Heart right ventricle (tissue), 16 donors: ENCODE measurements at regions of chr15 and their contacts with region 1.

Region 1: GRCh38 chr15:100635406-100636071 is 33.1 kb downstream of the ASB7 start:
- DNase-seq: no peak
- ATAC-seq: no peak
- H3K4me3 ChIP-seq: no peak overlapping the region
- H3K27ac ChIP-seq: no peak overlapping the region
- H3K4me1 ChIP-seq: peaks cover 0 to 8% (median 0%) of the 10 kb centered on the region in 9 donors
- H3K27me3 ChIP-seq: no peaks in the 10 kb centered on the region
- CTCF ChIP-seq: no peak

Region 2: DNA sequence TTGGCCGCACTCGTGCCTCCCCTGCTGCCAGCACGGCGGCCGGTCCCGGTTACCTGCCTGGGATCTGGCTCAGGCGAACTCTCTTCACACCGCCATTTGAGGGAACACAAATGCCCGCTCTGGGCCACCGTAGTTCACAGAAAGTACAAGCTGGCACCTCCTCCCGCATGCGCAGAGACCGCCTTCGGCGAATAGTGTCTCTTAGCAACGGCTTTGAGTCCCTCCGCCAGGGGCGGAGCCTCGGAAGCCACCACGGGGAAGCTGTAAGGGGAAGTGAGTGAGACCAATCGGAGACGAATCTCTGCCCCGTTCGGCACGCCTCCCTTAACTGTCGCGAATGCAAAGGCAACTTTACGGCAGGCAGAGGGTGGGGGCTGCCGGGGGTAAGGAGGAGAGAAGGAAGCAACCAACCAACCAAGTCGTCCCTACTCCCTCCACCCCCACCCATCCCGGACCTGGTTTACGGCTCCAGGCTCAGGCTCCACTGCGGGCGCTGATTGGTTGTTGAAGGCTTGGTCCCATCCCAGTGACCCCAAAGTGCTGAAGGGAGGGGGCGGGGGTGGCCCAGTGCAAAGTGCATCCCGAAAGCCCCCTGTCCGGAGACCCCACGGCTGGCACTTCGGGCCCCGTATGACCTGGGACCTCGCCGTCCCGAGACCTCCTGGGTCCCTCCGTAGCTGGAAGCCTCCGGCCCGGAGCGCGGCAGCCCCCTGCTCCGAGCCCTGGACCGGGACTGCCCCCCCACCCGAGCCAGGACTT is 33.3 kb before region 1 on chr15 and contains the starts of genes ASB7 and LINS1:
- intact Hi-C with region 1: no loop called
- DNase-seq: peak; percentile 100
- ATAC-seq: peak; percentile 97 to 99 (median 99)
- H3K4me3 ChIP-seq: peak within 1 kb of the TSS; percentile 63 to 100 (median 84)
- H3K27ac ChIP-seq: peak within 1 kb of the TSS; percentile 2 to 92 (median 88)
- H3K4me1 ChIP-seq: peaks cover 3 to 47% (median 37%) of the 10 kb centered on the region in 9 donors
- H3K27me3 ChIP-seq: no peaks in the 10 kb centered on the region
- CTCF ChIP-seq: peak in 1 of 9 donors; percentile 10
- total RNA-seq, gene ASB7: 4.4 to 7.0 (median 6.1) TPM
- total RNA-seq, gene LINS1: 5.4 to 12.2 (median 7.3) TPM

Region 3: GRCh38 chr15:100694381-100695021 is 59.0 kb after region 1 on chr15:
- intact Hi-C with region 1: loop called in 1 of 10 experiments (anchors 10 kb)
- DNase-seq: no peak
- ATAC-seq: peak in 6 of 8 donors; percentile 39 to 53 (median 50)
- H3K4me3 ChIP-seq: no peak overlapping the region
- H3K27ac ChIP-seq: peak overlapping the region in 7 of 10 donors; percentile 20 to 81 (median 42)
- H3K4me1 ChIP-seq: peaks cover 0 to 9% (median 0%) of the 10 kb centered on the region in 9 donors
- H3K27me3 ChIP-seq: peaks cover 0 to 11% (median 0%) of the 10 kb centered on the region in 7 donors
- CTCF ChIP-seq: no peak

Region 4: GRCh38 chr15:101008158-101009139 is 372.9 kb after region 1 on chr15:
- intact Hi-C with region 1: loop called in 4 of 10 experiments (anchors 2 to 5 kb)
- DNase-seq: peak; percentile 77 to 85
- ATAC-seq: peak; percentile 83 to 89 (median 86)
- H3K4me3 ChIP-seq: peak overlapping the region; percentile 23 to 62 (median 54)
- H3K27ac ChIP-seq: peak overlapping the region in 2 of 10 donors; percentile 31 to 48
- H3K4me1 ChIP-seq: peaks cover 2 to 23% (median 17%) of the 10 kb centered on the region in 9 donors
- H3K27me3 ChIP-seq: no peaks in the 10 kb centered on the region
- CTCF ChIP-seq: peak; percentile 95 to 99 (median 98)